ENCODE measurements at regions of chr15 and their contacts with region 1.

Region 1: DNA sequence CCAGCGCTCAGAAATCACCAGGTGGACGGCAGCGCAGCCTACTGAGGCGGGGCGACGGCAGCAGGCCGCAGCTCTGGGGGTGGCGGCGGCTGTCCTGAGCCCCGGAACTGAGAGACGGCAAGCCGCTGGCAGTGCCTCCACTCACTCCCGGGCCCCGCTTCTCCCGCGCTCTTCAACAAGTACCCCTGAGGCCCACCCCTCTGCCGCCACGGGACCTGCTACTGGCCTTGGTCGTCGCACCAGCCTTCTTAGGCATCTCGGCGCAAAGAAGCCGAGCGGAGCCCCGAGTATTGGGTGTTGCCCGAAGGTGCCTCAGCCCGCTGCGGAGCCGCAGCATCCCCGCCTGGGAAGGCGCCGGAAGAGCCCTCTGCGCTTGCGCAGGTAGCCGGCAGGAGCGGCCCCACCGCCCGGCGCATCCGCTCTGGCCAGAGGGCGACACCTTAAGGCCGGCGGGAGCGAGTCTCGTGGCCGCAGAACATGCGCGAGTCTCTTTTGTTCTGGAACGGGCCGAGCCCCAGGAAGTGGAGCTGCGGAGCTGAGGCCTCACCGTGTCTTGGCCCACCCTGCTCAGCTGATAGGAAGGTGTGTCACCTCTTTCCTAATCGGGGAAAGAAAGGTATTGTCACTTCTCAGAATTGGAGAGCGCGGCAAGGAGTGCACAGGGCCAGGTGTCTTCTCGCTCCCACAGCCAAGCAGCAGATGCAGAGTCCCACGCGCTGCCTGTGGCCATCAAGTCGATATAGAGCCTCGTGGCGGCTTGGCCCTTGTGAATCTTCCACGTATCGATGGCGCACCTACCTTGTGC is at the start of gene C15orf40:
- DNase-seq: peak; percentile 97
- total RNA-seq, gene C15orf40: 11.0 to 13.0 TPM

Region 2: DNA sequence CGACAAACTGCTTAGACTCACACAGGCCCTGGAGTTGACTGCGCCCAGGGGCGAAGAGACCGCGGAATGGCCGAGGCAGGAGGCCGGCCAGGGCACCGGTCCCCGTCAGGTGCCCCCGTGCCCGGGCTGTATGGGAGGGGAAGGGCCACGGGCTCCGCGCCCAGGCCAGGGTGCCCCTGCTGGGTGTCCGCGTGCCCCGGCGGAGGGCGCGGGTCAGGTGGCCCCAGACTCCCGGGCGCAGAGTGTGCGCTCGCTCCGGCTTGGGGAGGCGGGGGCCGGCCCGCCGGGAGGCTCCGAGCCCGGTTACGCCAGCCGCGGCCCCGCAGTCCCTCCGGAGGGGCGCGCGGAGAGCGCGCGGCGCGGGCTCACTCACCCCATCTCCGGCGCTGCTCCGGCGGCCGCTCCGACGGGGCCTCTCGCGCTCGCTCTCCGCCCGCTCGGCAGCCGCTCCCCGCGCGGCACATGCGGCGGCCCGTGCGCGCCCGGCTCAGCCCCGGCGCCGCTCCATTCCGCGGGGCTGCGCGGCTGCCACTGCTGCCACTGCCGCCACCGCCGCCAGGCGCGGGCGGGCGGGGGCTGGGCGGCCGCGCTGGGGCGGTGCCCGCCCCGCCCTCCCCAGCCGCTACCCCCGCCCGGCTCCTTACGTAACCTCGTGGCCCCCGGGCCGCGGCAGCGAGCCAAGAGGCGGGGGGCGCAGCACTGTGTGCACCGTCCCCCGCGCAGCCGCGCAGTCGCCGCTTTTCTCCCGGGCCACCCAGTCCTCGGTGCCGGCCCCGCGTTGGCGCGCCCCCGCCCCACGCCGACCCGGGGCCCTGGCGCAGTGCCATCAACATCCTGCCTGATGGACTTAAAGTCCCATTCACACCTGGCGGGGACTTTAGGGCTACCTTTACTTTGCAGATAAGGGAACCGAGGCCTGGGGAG is 59.1 kb before region 1 on chr15 and contains the start of gene HOMER2:
- intact Hi-C with region 1: no loop called
- DNase-seq: no peak
- total RNA-seq, gene HOMER2: 2.7 to 3.0 TPM

Region 3: GRCh38 chr15:83066734-83067637 is 55.5 kb after region 1 on chr15 and contains the start of gene BTBD1:
- intact Hi-C with region 1: loop called (anchors 5 to 10 kb)
- DNase-seq: peak; percentile 99
- total RNA-seq, gene BTBD1: 42.4 TPM